Mammary epithelial cell (primary cell): ENCODE measurements at regions of chr21 and their contacts with region 1.

Region 1: GRCh38 chr21:38355992-38356797 is 99.4 kb downstream of the KCNJ15 start:
- DNase-seq: peak; percentile 64
- H3K4me3 ChIP-seq: no peak overlapping the region
- H3K27ac ChIP-seq: no peak overlapping the region
- H3K4me1 ChIP-seq: peaks cover 10% of the 10 kb centered on the region
- H3K27me3 ChIP-seq: no peaks in the 10 kb centered on the region
- CTCF ChIP-seq: peak; percentile 90 to 99

Region 2: DNA sequence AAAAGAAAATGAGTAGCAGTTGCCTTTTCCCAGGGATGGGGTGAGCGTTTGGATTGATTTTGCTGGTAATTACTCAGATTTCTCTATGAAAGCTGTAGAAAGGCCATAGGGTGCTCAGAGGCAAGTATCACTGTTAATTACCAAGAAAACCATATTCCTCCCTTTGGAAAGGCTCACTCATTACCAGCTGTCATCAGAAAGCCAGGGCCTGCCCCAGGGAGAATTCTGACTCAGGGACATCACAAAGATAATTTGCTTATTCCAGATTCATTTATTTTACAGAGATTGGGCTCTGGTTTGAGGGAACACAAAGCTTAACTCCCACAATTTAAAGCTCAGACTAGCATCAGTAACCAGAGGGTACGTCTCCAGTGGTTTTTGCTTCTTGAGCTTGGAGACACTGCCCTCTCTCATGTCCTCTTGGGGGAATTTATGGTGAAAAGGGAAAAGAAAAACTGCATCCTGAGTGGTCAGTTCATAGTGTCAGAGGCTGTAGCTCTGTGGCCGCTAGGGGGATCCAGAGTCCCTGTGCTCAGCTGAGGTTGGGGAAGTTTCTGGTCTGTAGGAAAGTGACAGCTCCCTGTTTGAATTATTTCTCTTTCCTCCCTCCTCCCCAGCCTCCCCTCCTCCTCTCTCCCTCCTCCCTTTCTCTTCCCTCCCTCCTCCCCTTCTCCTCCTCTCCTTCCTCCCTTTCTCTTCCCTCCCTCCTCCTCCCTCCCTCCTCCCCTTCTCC is 644.2 kb before region 1 on chr21:
- CTCF ChIA-PET with region 1: no interaction called
- dilution Hi-C with region 1: no loop called
- in situ Hi-C with region 1: loop called (anchors 10 to 25 kb)
- intact Hi-C with region 1: loop called (anchors 1 kb)
- DNase-seq: peak; percentile 57
- H3K4me3 ChIP-seq: no peak overlapping the region
- H3K27ac ChIP-seq: no peak overlapping the region
- H3K4me1 ChIP-seq: no peaks in the 10 kb centered on the region
- H3K27me3 ChIP-seq: no peaks in the 10 kb centered on the region
- CTCF ChIP-seq: peak; percentile 91 to 92

Region 3: DNA sequence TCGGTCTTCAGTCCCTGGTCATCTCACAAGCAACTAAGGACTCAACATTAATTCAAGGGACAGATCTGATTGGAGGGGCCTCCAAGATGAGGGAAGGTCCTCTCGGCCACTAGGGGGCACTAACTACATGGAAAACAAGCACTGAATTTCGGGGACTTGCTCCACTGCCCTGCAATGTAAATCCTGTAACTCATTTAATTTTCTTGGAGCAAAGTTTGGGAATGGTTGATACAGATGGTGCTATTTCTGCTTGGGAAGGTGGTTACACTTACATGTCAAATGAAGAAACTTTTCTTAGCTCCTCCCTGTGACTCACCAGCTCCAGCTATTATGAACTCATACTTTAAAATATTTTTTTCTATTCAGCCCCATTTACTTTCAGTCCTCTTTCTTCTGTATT is 196.8 kb before region 1 on chr21:
- CTCF ChIA-PET with region 1: interaction called, 5 read pairs
- dilution Hi-C with region 1: no loop called
- in situ Hi-C with region 1: no loop called
- intact Hi-C with region 1: loop called (anchors 1 kb)
- DNase-seq: peak; percentile 52
- H3K4me3 ChIP-seq: no peak overlapping the region
- H3K27ac ChIP-seq: no peak overlapping the region
- H3K4me1 ChIP-seq: no peaks in the 10 kb centered on the region
- H3K27me3 ChIP-seq: no peaks in the 10 kb centered on the region
- CTCF ChIP-seq: peak; percentile 67 to 83

Region 4: DNA sequence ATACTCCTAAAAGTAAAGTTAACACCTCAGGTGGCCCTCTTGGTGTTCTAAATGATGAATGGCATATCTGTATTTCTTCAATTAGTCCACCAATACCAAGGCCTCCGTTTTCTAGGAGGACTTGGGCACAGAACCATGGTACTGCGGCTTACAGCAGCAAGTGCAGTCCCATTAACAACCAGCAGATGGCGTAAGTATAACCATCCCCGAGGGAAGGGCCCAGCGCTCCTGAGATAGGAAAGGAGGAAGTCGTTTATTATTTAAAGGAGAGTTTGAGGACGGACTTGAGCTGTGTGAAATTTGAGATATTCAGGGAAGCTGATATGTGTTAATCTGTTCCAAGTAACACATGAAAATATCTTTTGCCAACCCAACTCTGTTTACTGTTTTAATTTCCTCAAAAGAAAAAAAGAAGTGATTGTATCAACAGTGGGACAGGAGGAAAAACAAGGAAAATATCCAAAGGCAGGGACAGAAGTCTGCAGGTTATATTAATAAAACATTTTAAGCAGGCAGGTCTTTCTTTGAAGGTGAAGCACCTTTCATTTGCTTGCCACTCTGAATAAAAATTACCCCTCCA is 137.1 kb before region 1 on chr21:
- CTCF ChIA-PET with region 1: interaction called, 12 read pairs
- dilution Hi-C with region 1: no loop called
- in situ Hi-C with region 1: loop called (anchors 5 kb)
- intact Hi-C with region 1: loop called (anchors 1 kb)
- DNase-seq: peak; percentile 63
- H3K4me3 ChIP-seq: no peak overlapping the region
- H3K27ac ChIP-seq: no peak overlapping the region
- H3K4me1 ChIP-seq: peaks cover 4% of the 10 kb centered on the region
- H3K27me3 ChIP-seq: no peaks in the 10 kb centered on the region
- CTCF ChIP-seq: peak; percentile 96 to 99

Region 5: GRCh38 chr21:38289705-38290485 is 66.3 kb before region 1 on chr21:
- CTCF ChIA-PET with region 1: interaction called, 5 read pairs
- dilution Hi-C with region 1: no loop called
- in situ Hi-C with region 1: no loop called
- intact Hi-C with region 1: loop called (anchors 1 kb)
- DNase-seq: peak; percentile 99
- H3K4me3 ChIP-seq: no peak overlapping the region
- H3K27ac ChIP-seq: peak overlapping the region; percentile 93
- H3K4me1 ChIP-seq: peaks cover 48% of the 10 kb centered on the region
- H3K27me3 ChIP-seq: no peaks in the 10 kb centered on the region
- CTCF ChIP-seq: no peak

Region 6: DNA sequence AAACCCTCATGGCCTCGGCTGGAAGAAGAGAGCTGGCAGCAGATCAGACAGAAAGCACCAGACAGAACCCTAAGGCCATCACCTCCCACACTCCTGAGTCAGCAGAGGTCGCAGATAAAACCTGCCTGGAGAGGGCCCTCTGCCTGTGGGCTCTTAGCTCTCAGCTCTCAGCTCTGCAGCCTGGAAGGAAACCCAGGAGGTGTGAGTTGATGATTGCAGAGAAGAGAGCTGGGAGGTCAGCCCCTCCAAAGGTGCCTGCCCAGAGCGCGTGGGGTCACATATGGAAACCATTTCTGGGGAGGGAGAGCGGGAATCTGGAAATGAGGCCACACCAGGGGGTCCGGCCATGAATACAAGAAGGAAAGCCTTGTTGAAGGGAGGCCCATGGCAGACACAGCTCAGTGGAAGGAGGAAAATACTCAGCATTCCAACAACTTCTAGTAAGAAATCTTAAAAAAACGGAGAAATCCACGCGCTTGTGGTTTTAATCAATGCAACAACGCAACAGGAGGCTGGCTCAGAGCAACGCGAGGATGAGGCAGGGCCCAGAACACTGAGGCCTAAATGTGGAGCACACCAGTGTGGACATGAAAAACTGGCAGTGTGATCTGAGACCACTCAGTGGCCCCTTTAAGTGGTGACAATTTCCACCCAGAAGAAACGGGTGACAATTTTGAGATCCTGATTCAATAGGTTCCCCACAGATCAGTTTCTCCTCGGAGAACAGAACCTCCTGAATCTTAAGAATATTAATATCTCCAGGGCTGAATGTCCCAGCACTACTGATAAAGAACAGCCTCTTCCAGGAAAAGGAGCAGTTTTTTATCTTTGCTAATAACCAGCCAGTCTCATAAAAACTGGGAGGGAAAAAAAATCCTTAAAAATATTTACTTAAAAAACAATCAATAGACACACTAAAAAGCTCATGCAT is 781.3 kb after region 1 on chr21:
- CTCF ChIA-PET with region 1: no interaction called
- dilution Hi-C with region 1: no loop called
- in situ Hi-C with region 1: no loop called
- intact Hi-C with region 1: loop called (anchors 2 kb)
- DNase-seq: peak; percentile 51
- H3K4me3 ChIP-seq: no peak overlapping the region
- H3K27ac ChIP-seq: no peak overlapping the region
- H3K4me1 ChIP-seq: peaks cover 14% of the 10 kb centered on the region
- H3K27me3 ChIP-seq: no peaks in the 10 kb centered on the region
- CTCF ChIP-seq: peak; percentile 10 to 44